CD4-positive, alpha-beta T cell (primary cell): ENCODE measurements at regions of chr1 and their contacts with region 1.

Region 1: DNA sequence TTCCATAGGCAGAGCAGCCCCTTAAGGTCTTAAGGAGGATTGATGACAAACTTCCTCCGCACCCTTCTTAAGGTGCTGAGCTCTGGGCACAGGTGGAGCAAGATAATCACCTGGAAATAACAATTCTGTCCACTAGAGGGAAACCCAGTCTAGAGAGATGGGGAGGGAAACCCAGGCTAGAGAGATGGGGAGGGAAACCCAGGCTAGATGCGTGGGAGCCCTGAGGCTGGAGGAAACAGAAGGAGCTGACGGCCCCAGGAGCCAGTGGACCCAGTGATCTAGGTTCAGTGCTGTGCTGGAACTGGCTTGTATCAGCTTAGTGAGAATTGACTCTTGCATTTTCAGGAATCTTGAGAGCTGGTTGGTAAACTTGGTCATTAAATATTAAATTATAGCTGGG is 17.8 kb upstream of the MYCL start:
- DNase-seq: peak in 13 of 14 experiments; percentile 4 to 82 (median 21)
- ATAC-seq: peak; percentile 99
- H3K4me3 ChIP-seq: no peak overlapping the region
- H3K4me3 Mint-ChIP-seq: no peak overlapping the region
- H3K27ac ChIP-seq: no peak overlapping the region
- H3K27ac Mint-ChIP-seq: no peak overlapping the region
- H3K4me1 ChIP-seq: peaks cover 4% of the 10 kb centered on the region
- H3K4me1 Mint-ChIP-seq: no peaks in the 10 kb centered on the region
- H3K27me3 ChIP-seq: no peaks in the 10 kb centered on the region
- H3K27me3 Mint-ChIP-seq: peaks cover 4% of the 10 kb centered on the region
- CTCF ChIP-seq: peak; percentile 70

Region 2: DNA sequence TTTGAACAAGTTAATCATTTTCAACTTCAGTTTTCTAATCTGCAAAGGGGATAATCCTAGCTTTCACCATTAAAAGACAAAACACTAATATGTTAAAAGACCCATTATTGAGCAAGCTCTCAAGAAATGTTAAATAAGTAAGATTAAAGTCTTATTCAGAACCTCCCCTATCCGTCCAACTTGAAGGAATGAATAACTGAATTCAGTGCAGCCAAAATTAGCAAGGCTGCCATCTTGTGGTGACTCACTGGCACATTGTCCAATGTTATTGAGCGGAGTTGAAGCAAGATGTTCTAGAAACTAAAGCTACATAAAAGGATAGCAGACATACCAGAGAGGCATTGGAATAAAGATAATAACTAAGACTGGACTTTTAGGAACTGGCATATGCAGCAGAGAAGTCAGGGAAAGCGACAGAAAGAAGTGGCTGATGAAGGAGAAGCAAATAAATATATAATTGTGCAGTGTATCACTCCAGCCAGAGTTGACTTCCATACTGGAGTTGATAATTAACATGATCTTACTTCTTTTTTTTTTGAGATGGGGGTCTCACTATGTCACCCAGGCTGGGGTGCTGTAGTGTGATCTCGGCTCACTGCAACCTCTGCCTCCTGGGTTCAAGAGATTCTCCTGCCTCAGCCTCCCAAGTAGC is 112.8 kb after region 1 on chr1:
- CTCF ChIA-PET with region 1: interaction called, 18 read pairs
- POLR2A ChIA-PET with region 1: interaction called, 3 read pairs
- intact Hi-C with region 1: loop called (anchors 1 kb)
- DNase-seq: peak; percentile 13 to 79 (median 43)
- ATAC-seq: peak; percentile 74
- H3K4me3 ChIP-seq: no peak overlapping the region
- H3K4me3 Mint-ChIP-seq: peak overlapping the region; percentile 18
- H3K27ac ChIP-seq: no peak overlapping the region
- H3K27ac Mint-ChIP-seq: peak overlapping the region; percentile 52
- H3K4me1 ChIP-seq: peaks cover 47% of the 10 kb centered on the region
- H3K4me1 Mint-ChIP-seq: peaks cover 57% of the 10 kb centered on the region
- H3K27me3 ChIP-seq: no peaks in the 10 kb centered on the region
- H3K27me3 Mint-ChIP-seq: no peaks in the 10 kb centered on the region
- CTCF ChIP-seq: peak; percentile 78